Naive thymus-derived CD8-positive, alpha-beta T cell (primary cell): ENCODE measurements at regions of chrX and their contacts with region 1.

Region 1: DNA sequence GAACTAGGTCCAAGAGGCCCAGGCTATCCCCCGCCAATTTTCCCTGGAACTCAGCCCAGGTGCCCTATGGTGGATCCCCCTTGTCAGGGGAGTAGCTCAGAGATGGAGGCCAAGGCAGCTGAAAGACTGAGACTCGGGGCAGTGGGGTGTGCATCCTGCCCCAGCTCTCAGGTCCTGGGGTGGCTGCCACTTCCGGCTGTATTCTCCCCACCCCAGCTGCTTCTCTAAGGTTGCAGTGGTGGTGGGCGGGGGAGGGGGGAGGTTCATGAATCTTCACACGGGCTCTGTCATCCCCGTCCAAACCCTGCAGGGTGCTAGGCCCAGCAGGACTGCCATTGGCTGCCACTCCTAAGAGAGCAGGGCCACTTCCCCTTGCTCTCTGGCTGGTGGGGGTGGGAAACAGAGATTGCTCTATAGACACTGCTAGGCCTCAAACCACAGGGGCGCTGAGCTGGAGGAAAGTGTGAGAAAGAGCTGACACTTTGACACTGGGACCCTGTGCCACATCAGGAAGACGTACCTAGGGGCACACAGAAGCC is 1.5 kb downstream of the SASH3 start:
- DNase-seq: peak; percentile 45 to 94 (median 76)
- ATAC-seq: peak; percentile 75 to 84
- H3K4me3 Mint-ChIP-seq: peak overlapping the region; percentile 80 to 98 (median 96)
- H3K27ac Mint-ChIP-seq: peak overlapping the region; percentile 87 to 98 (median 96)
- H3K4me1 Mint-ChIP-seq: peaks cover 24 to 76% (median 66%) of the 10 kb centered on the region in 4 donors
- H3K27me3 Mint-ChIP-seq: no peaks in the 10 kb centered on the region

Region 2: DNA sequence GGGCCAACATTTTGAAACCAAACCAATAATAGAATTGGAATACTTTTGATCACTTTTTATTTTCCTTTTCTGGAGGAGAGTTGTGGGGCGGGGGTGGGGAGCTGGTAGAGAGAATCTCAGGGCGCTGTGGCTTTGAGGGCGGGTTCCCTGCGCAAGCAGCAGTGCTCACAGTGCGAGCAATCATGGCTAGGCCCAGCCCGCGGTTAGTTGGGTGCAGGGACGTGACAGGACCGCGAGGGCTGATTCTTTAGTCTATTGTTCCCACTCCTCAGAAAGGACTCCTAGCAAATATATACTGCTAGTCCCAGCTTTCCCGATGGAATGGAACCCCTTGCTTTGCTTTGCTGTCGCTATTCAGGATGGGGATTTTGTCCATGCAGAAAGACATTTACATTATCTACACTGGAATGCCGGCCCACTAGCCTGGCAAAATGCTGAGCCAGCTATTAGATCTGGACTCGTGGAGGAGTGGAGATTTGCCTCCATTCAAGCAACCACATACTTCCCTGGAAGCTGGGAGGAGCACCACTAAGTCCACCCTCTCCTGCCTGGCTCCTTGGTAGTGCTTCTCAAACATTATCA is 102.5 kb before region 1 on chrX:
- POLR2A ChIA-PET with region 1: interaction called, 14 read pairs
- DNase-seq: peak in 4 of 10 donors; percentile 5 to 28 (median 11)
- ATAC-seq: peak; percentile 60 to 74
- H3K4me3 Mint-ChIP-seq: peak overlapping the region; percentile 61 to 84 (median 70)
- H3K27ac Mint-ChIP-seq: peak overlapping the region in 7 of 10 donors; percentile 48 to 86 (median 69)
- H3K4me1 Mint-ChIP-seq: peaks cover 7 to 27% (median 17%) of the 10 kb centered on the region in 4 donors
- H3K27me3 Mint-ChIP-seq: no peaks in the 10 kb centered on the region

Region 3: GRCh38 chrX:129754056-129755024 is 26.9 kb before region 1 on chrX:
- POLR2A ChIA-PET with region 1: interaction called, 382 read pairs
- DNase-seq: no peak
- ATAC-seq: peak in 1 of 2 donors; percentile 20
- H3K4me3 Mint-ChIP-seq: peak overlapping the region in 5 of 10 donors; percentile 3 to 64 (median 44)
- H3K27ac Mint-ChIP-seq: peak overlapping the region in 5 of 10 donors; percentile 6 to 85 (median 66)
- H3K4me1 Mint-ChIP-seq: peaks cover 11 to 51% (median 43%) of the 10 kb centered on the region in 4 donors
- H3K27me3 Mint-ChIP-seq: no peaks in the 10 kb centered on the region

Region 4: GRCh38 chrX:129759576-129760061 is 21.6 kb before region 1 on chrX:
- POLR2A ChIA-PET with region 1: interaction called, 382 read pairs
- DNase-seq: peak in 7 of 10 donors; percentile 37 to 73 (median 67)
- ATAC-seq: peak; percentile 86 to 88
- H3K4me3 Mint-ChIP-seq: peak overlapping the region; percentile 16 to 74 (median 44)
- H3K27ac Mint-ChIP-seq: peak overlapping the region in 7 of 10 donors; percentile 28 to 80 (median 58)
- H3K4me1 Mint-ChIP-seq: peaks cover 13 to 64% (median 56%) of the 10 kb centered on the region in 4 donors
- H3K27me3 Mint-ChIP-seq: no peaks in the 10 kb centered on the region

Region 5: DNA sequence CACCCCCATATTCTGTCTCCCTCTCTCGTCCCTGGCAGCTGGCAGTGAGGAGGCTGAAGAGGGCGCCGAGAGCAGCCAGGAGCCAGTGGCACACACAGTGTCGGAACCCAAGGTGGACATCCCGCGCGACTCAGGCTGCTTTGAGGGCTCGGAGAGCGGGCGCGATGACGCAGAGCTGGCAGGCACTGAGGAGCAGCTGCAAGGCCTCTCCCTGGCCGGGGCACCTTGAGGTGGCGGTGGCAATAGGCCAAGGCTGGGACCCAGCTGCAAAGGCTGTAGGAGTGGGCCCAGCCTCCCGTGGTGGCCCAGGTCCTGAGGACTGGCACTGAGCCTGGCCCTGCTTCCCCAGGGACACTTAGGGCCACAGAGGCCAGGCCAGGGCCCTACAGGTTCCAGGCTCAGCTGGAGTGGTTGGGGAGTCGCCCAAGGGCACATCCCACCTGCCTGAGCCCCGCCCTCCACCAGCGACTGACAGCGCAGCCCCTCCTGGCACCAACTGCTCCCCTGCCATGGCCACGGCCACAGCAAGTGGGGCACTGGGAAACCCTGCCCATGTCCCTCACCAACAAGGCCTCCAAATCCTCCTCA is 12.5 kb after region 1 on chrX:
- POLR2A ChIA-PET with region 1: interaction called, 107 read pairs
- DNase-seq: no peak
- ATAC-seq: no peak
- H3K4me3 Mint-ChIP-seq: no peak overlapping the region
- H3K27ac Mint-ChIP-seq: peak overlapping the region in 1 of 10 donors; percentile 52
- H3K4me1 Mint-ChIP-seq: peaks cover 1 to 21% (median 12%) of the 10 kb centered on the region in 4 donors
- H3K27me3 Mint-ChIP-seq: no peaks in the 10 kb centered on the region